H1 (cell line): ENCODE measurements at regions of chr16 and their contacts with region 1.

Region 1: DNA sequence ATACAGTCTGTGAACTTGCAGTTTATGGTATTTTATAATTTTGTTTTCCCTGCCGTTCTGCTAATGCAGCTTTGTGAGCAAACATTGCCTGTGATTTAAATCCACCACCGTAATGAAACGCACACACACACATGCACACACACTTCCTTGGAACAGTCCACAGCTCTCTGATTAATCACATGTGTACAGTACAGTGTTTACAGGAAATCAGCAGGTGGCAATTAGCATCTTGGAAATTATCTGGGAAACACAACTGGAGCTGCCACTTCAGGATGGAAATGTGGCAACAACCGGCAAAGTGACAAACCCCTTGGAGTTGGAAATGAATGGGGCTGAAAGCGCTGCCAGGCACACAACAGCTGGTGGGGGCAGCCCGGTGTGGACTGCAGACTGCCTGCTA is 12.9 kb upstream of the ZKSCAN2 start:
- DNase-seq: no peak
- H3K4me3 ChIP-seq: no peak overlapping the region
- H3K27ac ChIP-seq: no peak overlapping the region
- H3K4me1 ChIP-seq: no peaks in the 10 kb centered on the region
- H3K27me3 ChIP-seq: no peaks in the 10 kb centered on the region
- CTCF ChIP-seq: no peak
- EP300 ChIP-seq: no peak
- POLR2A ChIP-seq: no peak
- RAD21 ChIP-seq: no peak

Region 2: DNA sequence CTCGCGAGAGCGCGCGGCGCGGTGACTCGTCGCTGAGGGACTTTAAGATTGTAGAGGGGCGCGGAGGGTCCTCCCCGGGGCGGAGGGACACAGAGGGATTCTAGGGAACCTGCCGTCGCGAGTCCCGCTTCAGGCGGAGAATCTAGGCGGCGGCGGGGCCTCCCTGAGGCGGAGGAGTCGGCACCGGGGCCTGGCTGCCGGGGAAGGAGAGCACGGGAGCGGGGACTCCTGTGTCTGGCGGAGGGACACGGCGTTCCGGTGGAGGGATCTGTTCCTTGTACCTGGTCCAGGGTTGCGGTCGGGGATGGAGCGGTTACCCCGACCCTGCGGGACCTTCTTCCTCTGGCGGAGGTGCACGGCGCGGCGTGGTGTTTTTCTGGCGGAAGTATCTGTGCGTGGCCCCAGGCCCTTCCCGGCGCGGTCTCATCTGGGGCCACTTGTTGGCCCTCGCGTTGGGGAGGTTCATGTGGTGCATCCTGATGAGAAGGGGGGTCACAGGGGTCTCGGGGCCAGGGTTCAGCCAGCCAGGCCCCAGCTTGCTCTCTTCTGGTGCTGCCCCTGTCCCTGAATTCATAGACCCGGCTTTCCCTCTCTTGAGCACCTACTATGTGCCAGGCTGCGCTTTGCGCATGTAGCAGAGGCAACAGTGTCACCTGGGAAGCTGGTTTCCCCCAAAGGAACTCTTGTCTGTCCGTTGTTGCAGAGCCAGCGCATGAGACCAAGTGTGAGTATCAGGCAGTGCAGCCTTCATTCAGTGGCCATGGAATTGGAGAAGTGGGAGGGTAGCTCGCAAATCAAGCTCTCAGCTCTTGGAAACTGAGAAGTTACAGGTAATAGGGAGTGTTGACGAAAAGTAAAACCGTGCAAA is 12.4 kb before region 1 on chr16:
- CTCF ChIA-PET with region 1: interaction called, 13 read pairs
- POLR2A ChIA-PET with region 1: interaction called, 23 read pairs
- DNase-seq: peak; percentile 60 to 91
- H3K4me3 ChIP-seq: peak overlapping the region; percentile 73 to 88 (median 82)
- H3K27ac ChIP-seq: peak overlapping the region; percentile 91
- H3K4me1 ChIP-seq: peaks cover 0 to 2% (median under 1%) of the 10 kb centered on the region in 4 experiments; a peak in 3 of 7 replicates
- H3K27me3 ChIP-seq: no peaks in the 10 kb centered on the region
- CTCF ChIP-seq: no peak
- EP300 ChIP-seq: no peak
- POLR2A ChIP-seq: peak; percentile 65 to 83
- RAD21 ChIP-seq: no peak

Region 3: DNA sequence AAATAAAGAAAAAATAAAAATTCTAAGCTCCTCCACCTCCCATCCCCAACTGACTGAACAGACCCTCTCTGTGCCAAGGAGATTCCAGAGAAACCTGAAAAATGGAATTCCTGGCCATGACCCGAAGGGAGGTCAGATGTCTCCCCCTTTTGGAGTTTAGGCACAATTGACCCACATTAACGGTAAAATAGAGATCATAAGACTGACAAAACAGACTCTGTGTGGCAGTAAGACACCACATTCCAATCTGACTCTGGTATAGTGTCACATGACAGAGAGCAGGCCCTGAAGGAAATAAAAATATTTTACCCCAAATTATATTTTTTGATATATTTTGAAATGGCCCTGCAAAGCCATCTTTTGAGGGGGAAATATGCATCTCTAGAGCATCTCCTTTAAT is 102.1 kb after region 1 on chr16:
- CTCF ChIA-PET with region 1: interaction called, 16 read pairs
- POLR2A ChIA-PET with region 1: no interaction called
- DNase-seq: no peak
- H3K4me3 ChIP-seq: no peak overlapping the region
- H3K27ac ChIP-seq: no peak overlapping the region
- H3K4me1 ChIP-seq: no peaks in the 10 kb centered on the region
- H3K27me3 ChIP-seq: no peaks in the 10 kb centered on the region
- CTCF ChIP-seq: peak in 2 of 3 experiments; percentile 56 to 61; a peak in 3 of 4 replicates
- EP300 ChIP-seq: no peak
- POLR2A ChIP-seq: no peak
- RAD21 ChIP-seq: peak; percentile 72 to 80